ENCODE measurements at regions of chrX and their contacts with region 1.

Region 1: DNA sequence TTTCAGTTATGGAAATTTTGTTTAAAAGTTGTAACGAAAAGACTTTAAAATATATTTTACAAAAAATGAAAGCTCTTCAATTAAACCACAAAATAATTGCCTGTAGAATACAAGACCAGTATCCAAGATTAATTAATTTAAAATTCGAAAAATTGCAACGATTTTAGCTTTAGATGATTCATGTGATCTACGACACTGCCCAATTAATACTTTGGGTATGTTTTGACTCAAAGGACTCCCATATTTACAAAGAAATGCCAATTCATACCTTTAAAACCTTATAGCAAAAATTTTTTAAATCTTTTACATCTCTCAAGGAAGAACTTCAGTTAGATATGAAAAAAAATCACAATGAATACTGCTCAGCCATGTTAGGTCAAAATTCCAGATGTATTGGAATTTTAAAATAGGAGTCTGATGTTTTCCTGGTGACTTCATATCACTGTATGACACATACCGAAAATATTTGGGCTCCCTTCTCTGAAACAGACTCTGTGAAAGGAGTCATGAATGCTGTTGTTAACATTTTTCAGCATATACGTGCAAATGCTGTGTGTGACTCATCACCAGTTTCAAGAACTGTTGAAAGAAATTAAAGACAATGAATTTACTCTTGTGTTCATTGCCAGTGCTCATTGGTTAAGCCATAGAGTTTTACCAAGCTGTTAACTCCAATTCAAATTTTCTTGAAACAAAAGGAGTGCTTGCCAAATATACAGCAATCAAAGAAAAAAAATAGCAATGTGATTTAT is 13.8 kb upstream of the SMS start:
- DNase-seq: peak; percentile 96
- ATAC-seq: peak; percentile 97
- H3K4me3 ChIP-seq: peak overlapping the region; percentile 57
- H3K27ac ChIP-seq: peak overlapping the region; percentile 78
- H3K4me1 ChIP-seq: peaks cover 19% of the 10 kb centered on the region
- H3K27me3 ChIP-seq: no peaks in the 10 kb centered on the region
- CTCF ChIP-seq: no peak

Region 2: DNA sequence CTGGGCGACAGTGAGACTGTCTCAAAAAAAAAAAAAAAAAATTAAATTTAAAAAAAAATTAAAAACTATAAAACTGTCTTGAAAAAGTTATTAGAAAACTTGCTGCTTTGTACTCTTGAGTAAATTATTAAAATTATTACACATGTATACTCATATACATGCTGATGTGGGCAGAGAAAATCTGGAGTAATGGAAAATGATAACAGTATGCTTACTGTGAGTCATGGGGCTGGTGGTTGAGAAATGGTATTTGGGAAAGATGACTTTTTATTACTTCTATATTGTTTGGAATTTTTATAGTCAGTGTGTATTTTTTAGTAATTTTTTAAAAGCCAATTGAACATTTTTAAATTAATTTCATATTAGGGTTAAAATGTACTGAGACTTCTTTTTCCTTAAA is 63.5 kb before region 1 on chrX:
- CTCF ChIA-PET with region 1: no interaction called
- POLR2A ChIA-PET with region 1: interaction called, 5 read pairs
- intact Hi-C with region 1: loop called (anchors 10 kb)
- DNase-seq: peak; percentile 10
- ATAC-seq: peak; percentile 18; the same call in 1 of the 2 replicates
- H3K4me3 ChIP-seq: no peak overlapping the region
- H3K27ac ChIP-seq: no peak overlapping the region
- H3K4me1 ChIP-seq: no peaks in the 10 kb centered on the region
- H3K27me3 ChIP-seq: no peaks in the 10 kb centered on the region
- CTCF ChIP-seq: no peak

Region 3: DNA sequence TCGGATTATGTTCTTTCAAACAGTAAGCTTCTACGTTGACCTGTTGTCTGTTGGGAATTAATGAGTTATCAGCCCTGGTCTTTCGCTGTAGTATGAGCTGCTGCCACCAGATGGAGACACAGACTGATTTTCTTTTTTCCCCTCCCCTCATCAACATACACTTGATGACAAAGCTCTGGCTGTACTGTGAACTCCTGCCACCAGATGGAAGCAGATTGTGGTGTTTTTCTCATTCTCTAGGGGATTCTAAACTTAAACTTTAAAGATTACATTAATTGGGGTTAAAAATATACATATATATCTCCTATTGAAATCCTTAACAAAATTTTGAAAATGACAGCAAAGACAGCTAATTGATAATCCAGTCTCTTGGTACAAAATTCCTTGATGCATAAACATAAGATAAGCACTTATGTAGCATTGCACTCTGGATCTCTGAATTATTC is 58.7 kb after region 1 on chrX:
- CTCF ChIA-PET with region 1: no interaction called
- POLR2A ChIA-PET with region 1: no interaction called
- intact Hi-C with region 1: no loop called
- DNase-seq: peak; percentile 82
- ATAC-seq: peak; percentile 89
- H3K4me3 ChIP-seq: no peak overlapping the region
- H3K27ac ChIP-seq: no peak overlapping the region
- H3K4me1 ChIP-seq: peaks cover 3% of the 10 kb centered on the region; the same call in 1 of the 2 replicates
- H3K27me3 ChIP-seq: no peaks in the 10 kb centered on the region
- CTCF ChIP-seq: peak; percentile 95

Measured in PC-3 (cell line).